Lower leg skin (tissue), 4 donors: ENCODE measurements at regions of chr12 and their contacts with region 1.

Region 1: DNA sequence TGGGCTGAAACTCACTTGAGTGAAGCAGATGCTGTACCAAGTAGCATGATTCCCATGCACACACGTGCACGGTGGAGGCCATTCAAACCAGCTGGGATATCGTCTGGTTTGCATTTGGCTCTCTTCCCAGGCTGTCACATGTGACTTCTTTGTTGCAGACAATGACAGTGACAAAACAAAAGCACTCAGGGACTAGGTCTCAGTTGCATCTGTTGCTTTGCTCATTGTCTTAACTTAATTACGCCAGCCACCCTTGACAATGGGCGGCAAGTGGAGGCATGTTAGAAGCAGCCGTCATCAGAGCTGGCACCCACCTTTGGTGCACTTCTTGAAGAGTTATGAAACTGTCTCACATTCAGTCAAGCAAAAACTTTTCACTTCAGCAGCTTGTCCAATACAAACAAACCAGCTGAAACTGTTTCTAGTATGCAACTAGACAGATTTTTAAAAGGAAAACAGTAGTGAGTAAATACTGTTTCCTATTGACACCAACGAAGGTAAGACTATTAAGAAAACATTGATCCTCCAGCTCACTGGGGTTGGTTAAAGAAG is 74.3 kb downstream of the IGF1 start:
- DNase-seq: peak in 1 of 2 donors; percentile 66
- H3K4me3 ChIP-seq: no peak overlapping the region
- CTCF ChIP-seq: no peak
- POLR2A ChIP-seq: no peak

Region 2: DNA sequence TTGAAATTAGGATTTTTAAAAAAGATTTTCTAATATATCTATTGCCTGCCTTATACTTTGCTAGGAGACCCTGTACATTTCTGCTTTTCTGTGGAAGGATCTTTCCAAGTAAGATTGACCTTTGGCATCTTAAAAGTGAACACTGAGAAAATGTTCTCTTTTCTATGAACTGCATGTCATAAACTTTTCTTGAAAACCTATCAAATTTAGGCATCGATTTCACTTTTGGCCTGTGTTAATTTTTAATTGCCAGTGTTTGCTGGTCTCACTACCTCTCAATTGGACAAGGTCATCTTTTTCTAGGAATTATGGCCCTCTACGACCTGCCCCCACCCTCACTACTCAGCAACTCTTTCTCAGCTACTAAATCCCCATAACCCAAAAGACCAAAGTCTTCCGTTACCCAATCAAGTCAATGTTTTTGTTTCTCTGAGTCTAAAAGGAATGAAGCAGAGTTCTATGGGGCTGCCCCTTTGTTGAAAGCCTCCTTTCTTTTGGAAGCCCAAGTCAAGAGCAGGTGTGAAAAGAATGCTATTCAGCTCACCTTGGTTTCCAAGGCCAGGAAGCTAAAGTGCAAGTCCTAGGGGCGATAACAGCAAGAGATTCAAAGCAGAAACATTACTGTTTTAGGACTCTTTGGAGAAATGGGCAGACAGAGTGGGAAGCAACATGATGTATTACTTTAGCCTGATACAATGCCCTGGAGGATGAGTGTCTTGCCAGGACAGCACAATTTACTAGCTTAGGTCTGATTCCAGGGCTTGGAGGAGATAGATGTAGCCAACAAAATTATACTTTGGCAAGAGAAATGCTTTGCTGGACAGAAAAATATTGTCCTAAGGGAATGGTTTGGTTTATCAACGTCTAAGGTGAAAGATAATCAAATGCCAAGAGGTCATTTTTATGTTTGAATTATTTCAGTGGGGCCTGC is 19.3 kb after region 1 on chr12:
- intact Hi-C with region 1: loop called (anchors 1 kb)
- DNase-seq: no peak
- H3K4me3 ChIP-seq: no peak overlapping the region
- CTCF ChIP-seq: no peak
- POLR2A ChIP-seq: no peak